Uterus (tissue), 4 donors: ENCODE measurements at regions of chr3 and their contacts with region 1.

Region 1: GRCh38 chr3:139329345-139329850 is 14.4 kb upstream of the MRPS22 start:
- DNase-seq: peak; percentile 79 to 80
- H3K4me3 ChIP-seq: no peak overlapping the region
- H3K27ac ChIP-seq: no peak overlapping the region
- H3K4me1 ChIP-seq: no peaks in the 10 kb centered on the region
- H3K27me3 ChIP-seq: no peaks in the 10 kb centered on the region
- CTCF ChIP-seq: peak; percentile 96 to 100 (median 100)
- POLR2A ChIP-seq: no peak

Region 2: GRCh38 chr3:138941259-138941885 is 388.0 kb before region 1 on chr3:
- intact Hi-C with region 1: loop called (anchors 10 kb)
- DNase-seq: no peak
- H3K4me3 ChIP-seq: no peak overlapping the region
- H3K27ac ChIP-seq: no peak overlapping the region
- H3K4me1 ChIP-seq: peaks cover 0 to 10% of the 10 kb centered on the region in 2 donors
- H3K27me3 ChIP-seq: peaks cover 0 to 27% of the 10 kb centered on the region in 2 donors
- CTCF ChIP-seq: peak in 2 of 4 experiments; percentile 13 to 43
- POLR2A ChIP-seq: no peak

Region 3: DNA sequence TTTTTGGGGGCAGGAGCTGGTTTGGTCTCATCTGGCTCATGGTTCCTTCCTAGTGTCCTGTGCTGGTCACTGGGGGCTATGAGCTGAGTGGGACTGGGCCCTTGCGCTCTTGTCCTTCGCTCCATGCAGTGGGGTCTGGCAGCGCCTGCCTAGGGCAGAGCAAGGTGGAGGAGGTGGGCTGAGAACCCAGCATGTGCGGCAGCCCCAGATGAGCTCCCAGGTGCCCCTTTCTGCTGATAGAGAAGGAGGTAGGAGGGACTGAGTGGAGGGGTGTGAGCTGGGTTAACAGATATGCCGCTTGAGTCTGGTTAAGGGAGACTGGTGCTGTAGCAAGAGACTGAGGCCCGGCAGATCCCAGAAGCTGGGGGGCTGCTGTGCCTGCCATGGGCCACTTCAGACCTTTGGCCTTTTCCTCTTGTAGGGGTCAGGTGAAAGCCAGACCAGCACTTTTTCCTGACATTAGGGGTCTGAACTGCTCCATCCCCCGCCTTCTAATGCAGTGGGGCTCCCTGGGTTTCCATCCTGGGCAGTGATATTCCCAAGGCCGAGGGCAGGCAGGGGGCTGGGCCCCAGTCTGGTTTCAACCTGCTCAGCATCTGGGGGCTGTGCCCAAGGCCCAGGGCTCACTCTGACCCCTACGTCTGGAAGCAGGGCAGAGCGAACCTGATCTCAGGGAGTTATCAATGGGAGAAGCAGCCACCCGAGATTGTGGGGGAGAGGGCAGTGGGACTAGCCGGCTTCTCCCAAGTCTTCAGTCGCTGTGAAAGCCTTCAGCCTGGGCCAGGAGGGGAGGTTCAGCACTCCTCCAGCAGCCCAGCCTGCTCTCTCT is 221.8 kb before region 1 on chr3:
- intact Hi-C with region 1: loop called (anchors 10 kb)
- DNase-seq: no peak
- H3K4me3 ChIP-seq: no peak overlapping the region
- H3K27ac ChIP-seq: no peak overlapping the region
- H3K4me1 ChIP-seq: no peaks in the 10 kb centered on the region
- H3K27me3 ChIP-seq: no peaks in the 10 kb centered on the region
- CTCF ChIP-seq: no peak
- POLR2A ChIP-seq: no peak